ENCODE measurements at regions of chr7 and their contacts with region 1.

Region 1: GRCh38 chr7:142932386-142933091 is 1.0 kb downstream of the TRPV5 start:
- DNase-seq: no peak

Region 2: DNA sequence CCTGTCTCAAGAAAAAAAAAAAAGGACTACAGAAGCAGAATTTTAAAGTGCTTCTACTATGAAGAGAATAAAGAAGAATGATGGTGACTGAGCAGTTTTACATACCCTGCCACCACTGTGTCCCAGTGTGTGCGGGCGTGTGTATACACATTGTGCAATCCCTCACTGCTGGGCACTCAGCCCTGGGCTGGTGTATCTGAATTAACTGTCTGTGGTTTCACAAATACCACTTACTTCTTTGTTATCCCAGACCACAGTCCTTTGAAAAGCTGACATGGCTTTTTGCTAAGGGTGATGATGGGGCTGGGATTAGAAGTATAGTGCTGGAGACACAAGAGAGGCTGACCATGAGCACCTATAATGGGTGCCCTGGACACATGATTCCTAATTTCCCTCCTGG is 25.9 kb before region 1 on chr7:
- intact Hi-C with region 1: loop called in 1 of 2 experiments (anchors 1 kb)
- DNase-seq: no peak

Measured in posterior vena cava (tissue), 2 donors.